ENCODE measurements at regions of chr7 and their contacts with region 1.

Region 1: DNA sequence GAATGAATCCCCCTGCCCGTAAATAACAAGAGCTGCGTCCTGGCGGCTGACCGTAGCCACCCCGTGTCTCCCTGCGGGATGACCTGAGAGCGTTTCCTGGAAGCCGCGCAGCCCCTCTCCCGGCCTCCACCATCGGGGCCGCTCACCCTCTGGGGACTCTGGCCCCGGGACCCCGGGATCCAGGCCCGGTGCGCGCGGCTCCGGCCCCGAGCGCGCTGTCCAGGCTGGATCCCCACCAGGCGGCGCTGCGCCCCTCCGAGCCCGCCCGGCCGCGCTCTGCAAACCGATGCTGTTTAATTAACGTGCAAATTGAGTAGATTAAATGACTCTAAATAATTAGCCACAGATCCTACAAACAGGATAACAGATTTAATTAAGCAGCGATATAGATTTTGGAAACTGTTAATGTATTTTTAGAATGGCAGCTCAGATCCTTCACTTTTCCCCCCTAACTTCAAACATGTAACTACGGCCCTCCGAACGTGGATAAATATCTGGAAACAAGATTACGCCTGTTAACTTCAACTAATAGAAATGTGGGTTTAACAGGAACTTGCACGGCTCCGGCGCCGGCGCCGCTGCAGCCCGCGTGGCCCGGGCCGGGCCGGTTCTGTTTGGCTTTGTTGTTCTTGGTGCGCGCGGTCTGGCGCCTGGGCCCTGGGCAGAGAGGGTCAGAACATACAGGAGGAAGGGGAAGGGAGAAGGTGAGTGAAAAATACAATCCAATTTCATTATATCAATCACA is 7.1 kb upstream of the UNCX start:
- DNase-seq: no peak
- ATAC-seq: peak; percentile 60

Region 2: GRCh38 chr7:1412322-1413261 is 187.0 kb after region 1 on chr7:
- intact Hi-C with region 1: loop called (anchors 5 kb)
- DNase-seq: peak; percentile 91
- ATAC-seq: peak; percentile 89

Region 3: DNA sequence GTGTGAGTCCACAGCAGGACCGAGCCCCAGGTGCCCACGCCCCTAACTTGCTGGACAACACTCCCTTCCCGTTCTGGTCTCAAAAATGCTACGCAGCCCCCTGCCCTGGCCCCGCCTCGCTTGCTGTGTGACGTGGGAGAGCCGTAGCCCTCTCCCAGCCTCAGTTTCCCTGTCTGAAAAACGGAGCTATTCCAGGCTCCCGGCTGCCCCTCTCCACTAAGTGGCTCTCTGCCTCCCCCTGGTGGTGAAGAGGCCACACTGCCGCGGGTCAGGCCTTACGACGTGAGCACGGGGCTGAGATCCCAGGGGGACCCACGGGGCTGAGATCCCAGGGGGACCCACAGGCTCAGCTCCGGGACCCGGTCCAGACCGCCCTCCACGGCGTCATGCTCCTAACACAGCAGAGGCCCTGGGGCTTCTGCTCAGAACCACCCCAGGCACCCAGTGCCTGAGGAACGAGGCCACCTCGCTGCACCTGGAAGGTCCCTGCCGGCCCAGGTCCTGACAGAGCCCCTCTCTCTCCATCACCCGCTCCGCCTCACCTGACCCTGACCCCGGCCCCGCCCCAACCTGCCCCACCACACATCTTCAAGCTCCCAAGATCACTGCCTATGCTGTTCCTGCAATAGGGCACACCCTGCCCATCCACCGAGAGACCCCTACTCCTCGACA is 206.9 kb after region 1 on chr7:
- intact Hi-C with region 1: loop called (anchors 10 kb)
- DNase-seq: peak; percentile 86
- ATAC-seq: peak; percentile 52

Measured in Right ventricle myocardium inferior (tissue), 1 donor.